Activated T-helper 1 cell treated with anti-CD3 and anti-CD28 coated beads, Interleukin-12 subunit alpha, Interleukin-12 subunit beta, Interleukin-2, Interleukin-4 antibody, amounts not matched to agents 30 ng/mL and 10 ng/mL and 1 ng/mL, durations not matched to agents 14 hours and 24 hours and 36 hours (primary cell): ENCODE measurements at regions of chr11 and their contacts with region 1.

Region 1: DNA sequence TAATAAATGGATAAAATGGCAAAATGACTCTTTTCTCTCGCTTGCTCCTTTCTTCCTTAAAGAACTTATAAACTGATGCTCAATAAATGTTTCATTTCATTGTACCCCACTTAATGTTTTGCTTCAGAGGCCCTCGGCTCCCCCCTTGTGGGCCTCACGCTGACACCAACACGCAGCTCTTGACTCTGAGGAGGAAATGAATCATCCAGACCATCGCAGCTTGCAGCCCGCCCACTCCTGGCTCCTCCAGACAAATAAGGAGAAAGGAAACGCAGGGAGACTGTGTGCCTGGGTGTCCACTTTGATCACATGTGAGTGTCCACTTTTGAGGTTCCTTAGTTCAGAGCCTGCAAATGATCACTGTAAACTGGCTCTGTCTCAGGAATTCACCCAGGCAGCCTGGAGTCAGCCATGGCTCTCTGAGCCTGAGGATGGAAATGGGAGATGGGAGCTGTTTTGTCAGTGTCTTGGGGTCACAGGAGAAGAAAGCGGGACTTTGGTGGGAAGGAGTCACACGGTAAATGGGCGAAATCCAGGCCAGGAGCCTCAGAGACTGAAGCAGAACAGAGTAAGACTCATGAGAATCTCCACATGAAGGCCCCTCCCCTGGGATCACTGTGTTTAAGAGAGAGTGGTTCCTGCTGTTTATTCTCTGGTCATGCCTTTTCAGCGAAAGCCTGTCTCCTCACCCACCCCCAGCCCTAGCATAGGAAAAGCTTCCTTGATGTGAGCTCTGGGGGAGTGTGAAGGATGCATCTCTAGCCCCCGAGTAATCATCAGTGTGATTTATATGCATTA is 96.5 kb downstream of the CWC15 start:
- DNase-seq: peak; percentile 38
- H3K4me3 Mint-ChIP-seq: peak overlapping the region; percentile 45
- H3K27ac Mint-ChIP-seq: peak overlapping the region; percentile 78
- H3K4me1 Mint-ChIP-seq: peaks cover 32% of the 10 kb centered on the region
- H3K27me3 Mint-ChIP-seq: no peaks in the 10 kb centered on the region

Region 2: GRCh38 chr11:93662177-93662575 is 1214.7 kb before region 1 on chr11:
- intact Hi-C with region 1: loop called (anchors 5 kb)
- DNase-seq: no peak
- H3K4me3 Mint-ChIP-seq: peak overlapping the region; percentile 89
- H3K27ac Mint-ChIP-seq: peak overlapping the region; percentile 86
- H3K4me1 Mint-ChIP-seq: peaks cover 47% of the 10 kb centered on the region
- H3K27me3 Mint-ChIP-seq: no peaks in the 10 kb centered on the region

Region 3: GRCh38 chr11:94623120-94623735 is 253.6 kb before region 1 on chr11:
- intact Hi-C with region 1: loop called (anchors 1 kb)
- DNase-seq: peak; percentile 27
- H3K4me3 Mint-ChIP-seq: no peak overlapping the region
- H3K27ac Mint-ChIP-seq: no peak overlapping the region
- H3K4me1 Mint-ChIP-seq: no peaks in the 10 kb centered on the region
- H3K27me3 Mint-ChIP-seq: peaks cover 7% of the 10 kb centered on the region

Region 4: GRCh38 chr11:94786264-94787126 is 90.3 kb before region 1 on chr11:
- intact Hi-C with region 1: loop called (anchors 5 kb)
- DNase-seq: no peak
- H3K4me3 Mint-ChIP-seq: no peak overlapping the region
- H3K27ac Mint-ChIP-seq: no peak overlapping the region
- H3K4me1 Mint-ChIP-seq: no peaks in the 10 kb centered on the region
- H3K27me3 Mint-ChIP-seq: peaks cover 4% of the 10 kb centered on the region

Region 5: GRCh38 chr11:95625164-95625900 is 748.5 kb after region 1 on chr11:
- intact Hi-C with region 1: no loop called
- DNase-seq: no peak
- H3K4me3 Mint-ChIP-seq: no peak overlapping the region
- H3K27ac Mint-ChIP-seq: no peak overlapping the region
- H3K4me1 Mint-ChIP-seq: peaks cover 7% of the 10 kb centered on the region
- H3K27me3 Mint-ChIP-seq: peaks cover 2% of the 10 kb centered on the region